ENCODE measurements at regions of chr2 and their contacts with region 1.

Region 1: GRCh38 chr2:216081487-216082116 is at the starts of genes PECR and TMEM169:
- DNase-seq: peak; percentile 71
- H3K4me3 ChIP-seq: peak within 1 kb of the TSS; percentile 85 to 90 (median 90)
- H3K27ac ChIP-seq: no peak within 1 kb of the TSS
- H3K4me1 ChIP-seq: peaks cover 24% of the 10 kb centered on the region
- H3K27me3 ChIP-seq: no peaks in the 10 kb centered on the region
- CTCF ChIP-seq: no peak
- total RNA-seq, gene PECR: 8.8 to 11.2 TPM
- total RNA-seq, gene TMEM169: 0.24 to 1.8 TPM

Region 2: DNA sequence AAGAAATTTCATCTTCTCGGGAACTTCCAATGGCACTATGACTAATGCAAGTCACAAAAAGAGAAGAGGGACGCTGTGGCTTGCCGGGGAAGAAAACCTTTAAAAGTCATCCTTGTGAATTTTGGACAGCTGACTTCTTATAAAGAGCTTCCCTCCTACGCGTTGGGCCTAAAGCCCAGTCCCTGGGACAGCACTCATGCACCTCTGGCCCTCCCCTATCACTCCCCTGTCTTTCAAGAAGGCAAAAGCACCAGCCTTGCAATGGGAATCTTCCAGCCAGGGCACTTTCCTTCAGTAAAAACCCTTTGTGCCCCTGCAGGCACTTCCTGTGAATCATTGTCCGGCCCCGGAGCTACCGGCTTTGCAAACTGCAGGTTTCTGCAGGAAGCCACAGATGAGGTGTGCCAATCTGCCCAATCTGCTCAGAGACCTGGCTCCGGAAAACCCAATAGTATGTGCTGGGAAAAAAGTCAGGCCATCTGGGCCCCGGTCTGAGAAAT is 75.4 kb before region 1 on chr2:
- CTCF ChIA-PET with region 1: no interaction called
- dilution Hi-C with region 1: no loop called
- in situ Hi-C with region 1: no loop called
- intact Hi-C with region 1: no loop called
- DNase-seq: peak; percentile 98
- H3K4me3 ChIP-seq: peak overlapping the region in 2 of 3 experiments; percentile 4 to 25
- H3K27ac ChIP-seq: peak overlapping the region; percentile 78
- H3K4me1 ChIP-seq: peaks cover 27% of the 10 kb centered on the region
- H3K27me3 ChIP-seq: no peaks in the 10 kb centered on the region
- CTCF ChIP-seq: no peak

Region 3: GRCh38 chr2:216108967-216109921 is 27.6 kb after region 1 on chr2 and contains the start of gene XRCC5:
- CTCF ChIA-PET with region 1: interaction called, 4 read pairs
- dilution Hi-C with region 1: no loop called
- in situ Hi-C with region 1: no loop called
- intact Hi-C with region 1: loop called (anchors 2 kb)
- DNase-seq: peak; percentile 95
- H3K4me3 ChIP-seq: peak within 1 kb of the TSS; percentile 85 to 90 (median 89)
- H3K27ac ChIP-seq: peak within 1 kb of the TSS; percentile 86
- H3K4me1 ChIP-seq: peaks cover 18% of the 10 kb centered on the region
- H3K27me3 ChIP-seq: no peaks in the 10 kb centered on the region
- CTCF ChIP-seq: no peak
- total RNA-seq, gene XRCC5: 191 to 245 TPM